ENCODE measurements at regions of chr14 and their contacts with region 1.

Region 1: GRCh38 chr14:76386915-76387782 is 11.2 kb downstream of the ESRRB start:
- DNase-seq: peak; percentile 41 to 95
- H3K4me3 ChIP-seq: peak overlapping the region in 1 of 4 experiments; percentile 28; a peak in 1 of 8 replicates
- H3K27ac ChIP-seq: no peak overlapping the region
- H3K4me1 ChIP-seq: peaks cover 0 to 4% (median 1%) of the 10 kb centered on the region in 4 experiments; a peak in 1 of 7 replicates
- H3K27me3 ChIP-seq: 0 out of 7 replicates have a peak, but pooled peaks cover 0 to 1% (median 0%) of the 10 kb centered on the region in 4 experiments
- CTCF ChIP-seq: peak; percentile 91 to 99 (median 92)
- EP300 ChIP-seq: no peak
- POLR2A ChIP-seq: no peak
- RAD21 ChIP-seq: peak; percentile 95 to 99

Region 2: GRCh38 chr14:76050797-76051392 is 336.3 kb before region 1 on chr14:
- CTCF ChIA-PET with region 1: interaction called, 51 read pairs
- POLR2A ChIA-PET with region 1: no interaction called
- DNase-seq: peak in 1 of 2 experiments; percentile 79
- H3K4me3 ChIP-seq: no peak overlapping the region
- H3K27ac ChIP-seq: no peak overlapping the region
- H3K4me1 ChIP-seq: peaks cover 2 to 11% (median 5%) of the 10 kb centered on the region in 4 experiments
- H3K27me3 ChIP-seq: no peaks in the 10 kb centered on the region
- CTCF ChIP-seq: peak in 2 of 3 experiments; percentile 77 to 83; a peak in 3 of 4 replicates
- EP300 ChIP-seq: no peak
- POLR2A ChIP-seq: no peak
- RAD21 ChIP-seq: peak; percentile 95 to 96

Region 3: GRCh38 chr14:76181546-76181945 is 205.6 kb before region 1 on chr14:
- CTCF ChIA-PET with region 1: interaction called, 18 read pairs
- POLR2A ChIA-PET with region 1: no interaction called
- DNase-seq: no peak
- H3K4me3 ChIP-seq: no peak overlapping the region
- H3K27ac ChIP-seq: no peak overlapping the region
- H3K4me1 ChIP-seq: no peaks in the 10 kb centered on the region
- H3K27me3 ChIP-seq: no peaks in the 10 kb centered on the region
- CTCF ChIP-seq: peak in 2 of 3 experiments; percentile 4 to 11; a peak in 2 of 4 replicates
- EP300 ChIP-seq: no peak
- POLR2A ChIP-seq: no peak
- RAD21 ChIP-seq: no peak; a peak in 2 of 4 replicates

Region 4: GRCh38 chr14:76236172-76237130 is 150.7 kb before region 1 on chr14:
- CTCF ChIA-PET with region 1: no interaction called
- POLR2A ChIA-PET with region 1: no interaction called
- DNase-seq: no peak
- H3K4me3 ChIP-seq: no peak overlapping the region
- H3K27ac ChIP-seq: no peak overlapping the region
- H3K4me1 ChIP-seq: peaks cover 0 to 4% (median 0%) of the 10 kb centered on the region in 4 experiments; a peak in 3 of 7 replicates
- H3K27me3 ChIP-seq: no peaks in the 10 kb centered on the region
- CTCF ChIP-seq: no peak
- EP300 ChIP-seq: no peak
- POLR2A ChIP-seq: no peak
- RAD21 ChIP-seq: no peak

Region 5: DNA sequence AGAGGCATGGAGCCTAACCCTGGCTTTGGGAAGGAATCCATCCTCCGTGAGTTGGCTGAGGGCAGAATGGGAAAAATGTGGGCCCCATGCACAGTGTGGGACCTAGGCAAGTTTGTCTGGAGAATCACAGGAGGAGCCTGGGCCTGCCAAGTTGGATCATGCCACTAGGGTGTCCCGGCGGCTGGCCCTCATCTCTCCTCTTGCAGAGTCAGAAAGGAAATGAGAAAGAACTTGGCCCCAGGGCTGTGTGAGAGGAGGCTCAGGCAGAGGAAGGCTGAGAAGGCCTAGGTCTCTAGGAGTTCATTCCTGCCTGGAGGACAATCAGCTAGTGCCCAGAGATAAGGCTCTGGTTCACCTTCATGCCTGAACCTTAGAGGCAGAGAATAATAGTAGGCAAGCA is 13.7 kb before region 1 on chr14:
- CTCF ChIA-PET with region 1: interaction called, 15 read pairs
- POLR2A ChIA-PET with region 1: no interaction called
- DNase-seq: no peak
- H3K4me3 ChIP-seq: no peak overlapping the region
- H3K27ac ChIP-seq: no peak overlapping the region
- H3K4me1 ChIP-seq: peaks cover 0 to 5% (median 3%) of the 10 kb centered on the region in 4 experiments; a peak in 3 of 7 replicates
- H3K27me3 ChIP-seq: peaks cover 24 to 45% (median 42%) of the 10 kb centered on the region in 4 experiments
- CTCF ChIP-seq: peak in 2 of 3 experiments; percentile 2 to 31; a peak in 1 of 4 replicates
- EP300 ChIP-seq: no peak
- POLR2A ChIP-seq: no peak
- RAD21 ChIP-seq: peak; percentile 10 to 20; a peak in 2 of 4 replicates

Region 6: DNA sequence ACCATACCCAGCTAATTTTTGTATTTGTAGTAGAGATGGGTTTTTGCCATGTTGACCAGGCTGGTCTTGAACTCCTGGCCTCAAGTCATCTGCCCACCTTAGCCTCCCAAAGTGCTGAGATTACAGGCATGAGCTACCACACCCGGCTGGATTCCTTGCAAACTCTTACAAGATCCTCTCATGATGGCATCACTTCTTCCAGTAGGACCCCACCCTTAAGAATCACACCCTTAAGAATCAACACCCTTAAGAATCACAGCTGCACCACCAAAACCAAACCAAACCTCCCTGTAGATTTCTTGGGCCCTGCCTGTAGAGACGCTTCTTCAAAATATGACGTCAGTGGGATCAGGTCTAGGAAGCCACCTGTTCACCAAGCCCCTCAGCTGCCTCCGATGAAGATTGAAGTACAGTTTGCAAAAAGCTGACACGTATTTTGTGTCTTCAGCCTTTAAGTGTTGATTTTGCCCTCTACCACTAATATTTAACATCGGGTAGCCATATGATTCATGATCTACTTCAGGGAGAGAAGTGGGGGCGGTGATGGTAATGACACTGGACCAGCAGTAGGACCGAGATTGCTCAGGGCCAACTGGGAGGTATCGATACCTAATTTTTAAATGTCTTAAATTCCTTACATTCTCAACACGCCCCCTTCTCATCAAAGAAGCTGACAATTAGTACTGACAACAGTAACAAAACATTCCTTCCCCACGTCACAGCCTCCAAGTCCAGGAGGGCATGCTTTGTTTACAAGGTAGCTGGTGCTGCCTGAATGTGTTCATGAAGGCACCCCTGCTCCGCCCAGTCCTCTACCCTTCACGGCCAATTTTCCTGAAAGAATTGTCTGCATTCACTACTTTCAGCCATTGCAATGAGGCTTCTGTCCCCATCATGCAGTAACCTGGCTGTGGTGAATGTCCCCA is 45.9 kb after region 1 on chr14:
- CTCF ChIA-PET with region 1: interaction called, 11 read pairs
- POLR2A ChIA-PET with region 1: no interaction called
- DNase-seq: no peak
- H3K4me3 ChIP-seq: no peak overlapping the region
- H3K27ac ChIP-seq: no peak overlapping the region
- H3K4me1 ChIP-seq: peaks cover 0 to 3% (median 2%) of the 10 kb centered on the region in 4 experiments; a peak in 4 of 7 replicates
- H3K27me3 ChIP-seq: no peaks in the 10 kb centered on the region
- CTCF ChIP-seq: no peak
- EP300 ChIP-seq: no peak
- POLR2A ChIP-seq: no peak
- RAD21 ChIP-seq: no peak

Measured in H1 (cell line).